ENCODE measurements at regions of chr6 and their contacts with region 1.

Region 1: DNA sequence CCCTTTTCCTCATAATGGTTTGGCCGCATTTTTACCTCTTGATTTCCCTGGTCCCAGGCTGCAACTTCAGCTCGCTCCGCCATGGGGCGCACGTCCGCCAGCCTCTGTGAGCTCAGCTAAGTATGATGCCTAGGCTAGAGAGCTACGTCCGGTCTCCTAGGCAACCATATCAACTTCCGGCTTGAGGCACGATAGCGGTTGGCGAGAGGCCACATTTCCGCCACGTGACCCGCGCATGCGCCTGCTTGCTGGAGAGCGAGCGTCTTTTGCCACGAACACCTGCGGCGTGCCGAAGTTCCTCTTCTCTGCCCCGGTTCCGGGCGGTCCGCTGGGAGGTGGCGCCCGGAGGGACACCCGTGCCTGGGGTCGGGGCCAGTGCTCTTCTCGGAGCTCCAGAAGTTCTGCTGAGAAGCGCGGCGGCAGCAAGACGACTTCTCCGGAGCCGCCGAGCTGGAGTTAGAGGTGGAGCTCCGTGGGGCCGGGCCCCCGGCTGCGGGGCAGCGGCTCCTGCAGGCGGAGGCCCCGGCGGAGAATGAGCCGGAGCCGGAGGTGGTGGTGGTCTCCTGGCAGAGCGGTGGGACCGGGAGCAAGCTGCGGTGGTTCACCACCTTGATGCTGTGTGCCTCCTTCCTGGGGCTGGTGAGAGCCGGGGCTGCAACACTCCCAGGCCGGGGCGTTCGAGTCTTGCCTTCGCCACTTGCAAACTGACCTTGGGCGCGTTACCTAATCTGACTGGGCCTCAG is 172.0 kb downstream of the SLC16A10 start:
- DNase-seq: peak; percentile 97 to 99 (median 98)
- H3K4me3 ChIP-seq: peak overlapping the region; percentile 61 to 100 (median 89)
- H3K27ac ChIP-seq: peak overlapping the region in 51 of 59 donors; percentile 1 to 88 (median 73)
- H3K27me3 ChIP-seq: peaks cover 0 to 8% (median 0%) of the 10 kb centered on the region in 45 donors
- CTCF ChIP-seq: peak; percentile 92 to 100 (median 98)

Region 2: DNA sequence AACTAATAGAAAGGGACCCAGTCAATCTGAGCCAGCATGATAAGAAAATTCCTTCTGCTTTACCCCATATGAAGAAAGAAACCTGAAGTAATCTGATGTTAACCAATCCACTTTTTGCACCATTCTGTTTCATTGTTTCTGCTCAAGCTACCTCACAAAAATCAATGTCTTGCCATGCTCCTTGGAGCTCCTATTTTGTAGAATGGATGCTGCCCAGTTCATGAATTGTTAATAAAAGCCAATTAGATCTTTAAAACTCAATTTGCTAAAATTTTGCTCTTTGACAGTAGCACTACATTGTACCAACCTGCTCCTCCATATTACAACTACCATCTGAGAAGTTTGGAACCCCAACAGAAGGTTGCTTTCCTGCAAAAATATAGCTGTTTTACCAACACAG is 1397.3 kb before region 1 on chr6:
- intact Hi-C with region 1: loop called in 1 of 2 experiments (anchors 5 kb)
- DNase-seq: no peak
- H3K4me3 ChIP-seq: no peak overlapping the region
- H3K27ac ChIP-seq: no peak overlapping the region
- H3K27me3 ChIP-seq: no peaks in the 10 kb centered on the region
- CTCF ChIP-seq: no peak

Region 3: GRCh38 chr6:111011360-111012142 is 247.7 kb before region 1 on chr6:
- intact Hi-C with region 1: loop called in 1 of 2 experiments (anchors 2 kb)
- DNase-seq: no peak
- H3K4me3 ChIP-seq: no peak overlapping the region
- H3K27ac ChIP-seq: peak overlapping the region in 33 of 59 donors; percentile 4 to 80 (median 49)
- H3K27me3 ChIP-seq: no peaks in the 10 kb centered on the region
- CTCF ChIP-seq: peak; percentile 39 to 84 (median 68)

Region 4: DNA sequence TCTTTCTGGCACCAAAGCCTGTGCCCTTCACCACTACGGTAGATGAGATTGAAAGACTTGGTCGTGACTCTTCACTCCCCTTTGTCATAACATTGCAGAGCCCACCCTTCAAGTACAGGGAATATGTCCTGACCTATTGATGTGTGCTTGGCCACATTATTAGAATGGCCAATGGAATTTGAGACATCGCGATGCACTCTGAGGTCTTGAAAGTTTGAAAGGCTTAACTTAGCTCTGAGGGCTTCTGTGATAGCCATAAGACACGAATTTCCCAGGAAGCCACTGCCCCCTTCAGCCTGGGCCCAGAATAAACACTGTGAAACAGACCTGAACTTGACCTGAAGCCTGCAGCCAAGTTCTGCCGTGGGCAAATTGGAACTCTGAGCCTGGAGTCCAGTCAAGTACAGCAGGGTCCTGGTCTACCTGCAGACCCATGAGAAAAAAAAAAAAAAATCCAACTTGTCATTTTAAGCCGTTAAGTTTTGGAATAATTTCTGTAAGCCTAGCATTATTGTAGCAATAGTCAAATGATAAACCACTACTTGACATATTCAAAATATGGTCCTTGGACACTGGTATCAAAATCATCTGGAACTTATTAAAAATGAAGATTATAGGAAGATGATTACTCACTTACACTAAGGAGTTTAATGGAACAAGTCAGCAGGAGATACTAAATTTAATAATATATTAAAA is 383.4 kb after region 1 on chr6:
- intact Hi-C with region 1: loop called (anchors 5 to 10 kb)
- DNase-seq: peak in 7 of 10 donors; percentile 28 to 69 (median 56)
- H3K4me3 ChIP-seq: peak overlapping the region in 9 of 59 donors; percentile 9 to 26 (median 18)
- H3K27ac ChIP-seq: no peak overlapping the region
- H3K27me3 ChIP-seq: no peaks in the 10 kb centered on the region
- CTCF ChIP-seq: peak in 55 of 56 donors; percentile 11 to 78 (median 60)

Region 5: GRCh38 chr6:111709615-111710398 is 450.5 kb after region 1 on chr6:
- intact Hi-C with region 1: loop called in 1 of 2 experiments (anchors 10 kb)
- DNase-seq: peak in 6 of 10 donors; percentile 47 to 69 (median 60)
- H3K4me3 ChIP-seq: peak overlapping the region in 54 of 59 donors; percentile 1 to 62 (median 34)
- H3K27ac ChIP-seq: peak overlapping the region in 54 of 59 donors; percentile 4 to 86 (median 76)
- H3K27me3 ChIP-seq: no peaks in the 10 kb centered on the region
- CTCF ChIP-seq: peak; percentile 75 to 97 (median 90)

Region 6: GRCh38 chr6:112043032-112044007 is 784.1 kb after region 1 on chr6:
- intact Hi-C with region 1: loop called (anchors 2 to 10 kb)
- DNase-seq: peak; percentile 88 to 95 (median 92)
- H3K4me3 ChIP-seq: peak overlapping the region; percentile 41 to 83 (median 67)
- H3K27ac ChIP-seq: peak overlapping the region; percentile 10 to 97 (median 87)
- H3K27me3 ChIP-seq: no peaks in the 10 kb centered on the region
- CTCF ChIP-seq: peak; percentile 83 to 99 (median 93)